Naive thymus-derived CD4-positive, alpha-beta T cell (primary cell): ENCODE measurements at regions of chr14 and their contacts with region 1.

Region 1: DNA sequence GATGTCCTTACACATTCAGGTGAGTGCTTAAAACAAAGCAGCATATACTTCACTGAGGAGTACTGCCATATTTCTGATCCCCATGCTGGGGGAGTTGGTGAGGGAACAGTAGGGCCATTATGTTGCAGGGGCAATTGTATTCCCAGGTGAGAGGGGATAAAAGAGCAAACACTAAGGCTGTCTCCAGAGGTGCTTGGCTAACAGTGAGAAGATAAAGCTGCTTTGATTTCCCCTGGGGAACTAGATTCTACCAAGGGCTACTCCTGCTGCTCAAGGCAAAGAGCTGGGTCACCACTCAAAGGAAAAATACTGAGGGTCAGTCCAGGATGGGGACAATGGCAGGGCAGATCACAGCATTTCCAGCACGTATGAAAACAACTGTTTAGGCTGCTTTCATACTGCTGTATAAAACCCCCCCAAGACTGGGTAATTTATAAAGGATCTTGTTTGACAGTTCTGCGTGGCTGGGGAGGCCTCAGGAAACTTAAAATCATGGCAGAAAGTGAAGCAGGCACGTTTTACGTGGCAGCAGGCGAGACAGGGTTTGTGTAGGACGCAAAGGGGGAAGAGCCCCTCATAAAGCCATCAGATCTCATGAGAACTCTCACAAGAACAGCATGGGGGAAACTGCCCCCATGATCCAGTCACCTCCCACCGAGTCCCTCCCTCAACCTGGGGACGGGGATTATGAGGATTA is 47.8 kb upstream of the OR5AU1 start:
- DNase-seq: no peak
- ATAC-seq: no peak
- H3K4me3 ChIP-seq: no peak overlapping the region
- H3K4me3 Mint-ChIP-seq: no peak overlapping the region
- H3K27ac ChIP-seq: no peak overlapping the region
- H3K27ac Mint-ChIP-seq: peak overlapping the region in 8 of 9 donors; percentile 2 to 76 (median 31)
- H3K4me1 ChIP-seq: no peaks in the 10 kb centered on the region
- H3K4me1 Mint-ChIP-seq: peaks cover 7 to 50% (median 23%) of the 10 kb centered on the region in 7 donors
- H3K27me3 ChIP-seq: no peaks in the 10 kb centered on the region
- H3K27me3 Mint-ChIP-seq: no peaks in the 10 kb centered on the region

Region 2: DNA sequence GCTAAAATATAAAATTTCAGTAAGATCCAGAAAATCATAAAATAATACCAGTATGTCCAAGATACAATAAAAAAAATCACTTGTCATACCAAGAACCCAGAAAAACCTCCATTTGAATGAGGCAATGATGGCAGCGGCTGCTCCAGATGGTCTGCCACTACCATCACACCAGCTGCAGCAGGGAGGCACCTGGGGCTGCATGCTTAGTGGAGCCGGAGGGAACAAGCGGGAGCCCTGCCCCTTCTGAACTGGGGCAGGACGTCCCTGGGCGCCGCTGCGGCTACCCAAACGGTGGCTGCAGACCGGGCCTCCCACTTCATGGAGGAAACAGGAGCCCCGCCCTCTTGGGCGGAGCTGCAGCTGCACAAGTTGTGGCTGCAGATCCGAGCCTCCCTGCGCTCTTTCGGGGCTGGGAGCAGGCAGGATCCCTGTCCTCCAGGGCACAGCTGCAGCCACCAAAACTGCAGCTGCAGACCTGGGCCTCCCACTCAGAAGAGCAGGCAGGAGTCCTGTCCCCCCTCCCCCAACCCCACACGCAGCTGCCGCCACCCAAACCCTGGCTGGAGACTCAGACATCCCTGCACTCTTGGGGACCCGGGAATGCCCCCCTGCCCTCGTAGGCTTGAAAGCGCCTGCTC is 11.7 kb before region 1 on chr14:
- CTCF ChIA-PET with region 1: no interaction called
- POLR2A ChIA-PET with region 1: interaction called, 11 read pairs
- intact Hi-C with region 1: no loop called
- DNase-seq: peak; percentile 26 to 67 (median 54)
- ATAC-seq: peak; percentile 93
- H3K4me3 ChIP-seq: peak overlapping the region; percentile 65
- H3K4me3 Mint-ChIP-seq: peak overlapping the region; percentile 71 to 84 (median 81)
- H3K27ac ChIP-seq: peak overlapping the region; percentile 40
- H3K27ac Mint-ChIP-seq: peak overlapping the region in 2 of 9 donors; percentile 28 to 85
- H3K4me1 ChIP-seq: peaks cover 6 to 7% of the 10 kb centered on the region in 2 donors
- H3K4me1 Mint-ChIP-seq: peaks cover 8 to 17% (median 14%) of the 10 kb centered on the region in 7 donors
- H3K27me3 ChIP-seq: no peaks in the 10 kb centered on the region
- H3K27me3 Mint-ChIP-seq: peaks cover 0 to 20% (median 0%) of the 10 kb centered on the region in 5 donors

Region 3: DNA sequence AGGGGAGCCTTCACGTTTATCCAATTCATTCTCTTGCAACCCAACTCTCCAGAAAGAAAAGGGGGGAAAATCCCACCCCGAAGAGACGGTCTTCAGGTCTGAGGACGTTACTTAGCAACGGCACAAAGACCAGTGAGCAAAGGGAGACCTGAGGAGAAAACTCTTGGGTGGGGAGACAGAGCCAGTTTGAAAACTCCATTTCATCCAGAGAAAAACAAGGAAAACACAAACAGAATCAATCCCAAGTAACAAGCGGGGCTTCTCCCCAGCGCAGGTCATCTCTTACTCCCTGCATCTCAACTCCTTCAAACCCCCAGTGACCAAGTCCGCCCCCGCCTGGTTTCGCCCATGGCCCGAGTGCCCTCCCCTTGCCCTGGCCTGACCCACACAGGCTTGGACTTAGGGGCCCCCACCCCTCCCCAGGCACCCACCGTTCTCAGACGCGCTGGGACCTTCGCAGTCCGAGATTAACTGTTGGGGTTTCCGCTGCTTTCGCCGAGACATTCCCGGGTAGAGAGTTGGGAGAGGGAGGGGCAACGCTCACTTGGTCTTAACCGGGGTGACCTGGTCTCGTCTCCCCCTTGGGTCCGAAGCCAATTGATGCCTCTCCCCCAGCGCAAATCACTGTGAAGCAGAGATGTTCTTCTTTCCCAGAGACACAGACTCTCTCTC is 332.9 kb after region 1 on chr14:
- CTCF ChIA-PET with region 1: no interaction called
- POLR2A ChIA-PET with region 1: no interaction called
- intact Hi-C with region 1: no loop called
- DNase-seq: no peak
- ATAC-seq: no peak
- H3K4me3 ChIP-seq: no peak overlapping the region
- H3K4me3 Mint-ChIP-seq: peak overlapping the region in 7 of 10 donors; percentile 5 to 67 (median 43)
- H3K27ac ChIP-seq: no peak overlapping the region
- H3K27ac Mint-ChIP-seq: peak overlapping the region in 1 of 9 donors; percentile 3
- H3K4me1 ChIP-seq: no peaks in the 10 kb centered on the region
- H3K4me1 Mint-ChIP-seq: peaks cover 4 to 13% (median 10%) of the 10 kb centered on the region in 7 donors
- H3K27me3 ChIP-seq: peaks cover 0 to 3% of the 10 kb centered on the region in 2 donors
- H3K27me3 Mint-ChIP-seq: peaks cover 41 to 67% (median 58%) of the 10 kb centered on the region in 5 donors